Right lobe of liver (tissue), 6 donors: ENCODE measurements at regions of chr17 and their contacts with region 1.

Region 1: GRCh38 chr17:35529866-35530265 is 7.6 kb downstream of the SLFN12L start:
- DNase-seq: no peak
- ATAC-seq: no peak
- H3K4me3 ChIP-seq: no peak overlapping the region
- H3K27ac ChIP-seq: no peak overlapping the region
- H3K4me1 ChIP-seq: peaks cover 0 to 10% (median 4%) of the 10 kb centered on the region in 4 donors
- H3K27me3 ChIP-seq: no peaks in the 10 kb centered on the region
- CTCF ChIP-seq: no peak
- POLR2A ChIP-seq: no peak

Region 2: DNA sequence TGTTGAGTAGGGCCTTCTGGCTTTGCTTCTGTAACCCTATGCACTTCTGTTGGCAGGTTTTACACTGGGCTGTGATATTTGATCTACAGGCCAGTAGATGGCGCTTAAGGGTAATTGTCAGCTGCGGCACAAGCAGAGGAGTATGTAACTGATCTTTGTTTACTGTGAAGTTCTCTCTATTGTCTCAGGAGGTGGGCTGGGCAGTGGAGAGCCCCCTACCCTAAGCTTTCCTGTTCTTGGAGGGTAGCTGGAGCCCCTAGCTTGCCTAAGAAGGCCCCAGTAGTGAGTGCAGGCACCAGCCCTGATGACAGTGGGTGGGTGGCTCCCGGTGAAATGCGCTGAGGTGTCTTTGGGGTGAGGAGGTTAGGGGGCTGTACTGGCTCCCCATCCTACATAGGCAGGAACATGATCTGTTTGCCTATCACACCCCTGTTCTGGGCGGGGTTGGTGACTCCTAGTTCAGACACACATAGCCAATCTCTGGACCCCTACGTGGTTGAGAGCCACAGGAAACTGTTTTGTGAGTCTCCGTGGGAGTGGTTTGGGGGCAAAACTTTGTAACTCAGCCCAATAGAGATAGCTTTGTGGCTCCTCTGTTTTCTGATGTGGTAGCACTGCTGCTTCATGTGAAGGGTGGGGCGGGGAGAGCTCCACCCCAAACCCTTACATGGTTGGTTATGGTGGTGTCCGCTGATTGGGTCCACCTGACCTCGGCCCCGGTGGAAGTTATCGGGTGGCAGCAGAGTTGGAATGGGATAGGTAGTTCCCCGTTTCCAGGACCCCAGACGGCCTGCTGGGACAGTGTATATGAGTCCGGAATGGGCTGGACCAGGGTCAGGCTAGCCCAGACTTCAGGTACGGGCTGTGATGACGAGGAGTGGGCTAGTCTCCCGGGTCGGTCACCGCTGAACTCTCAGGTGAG is 216.8 kb before region 1 on chr17:
- intact Hi-C with region 1: loop called (anchors 5 kb)
- DNase-seq: peak; percentile 28 to 60 (median 56)
- ATAC-seq: peak; percentile 93 to 96 (median 94)
- H3K4me3 ChIP-seq: peak overlapping the region; percentile 1 to 13 (median 8)
- H3K27ac ChIP-seq: peak overlapping the region in 2 of 3 donors; percentile 25 to 41
- H3K4me1 ChIP-seq: no peaks in the 10 kb centered on the region
- H3K27me3 ChIP-seq: no peaks in the 10 kb centered on the region
- CTCF ChIP-seq: peak; percentile 78 to 85 (median 82)
- POLR2A ChIP-seq: no peak

Region 3: DNA sequence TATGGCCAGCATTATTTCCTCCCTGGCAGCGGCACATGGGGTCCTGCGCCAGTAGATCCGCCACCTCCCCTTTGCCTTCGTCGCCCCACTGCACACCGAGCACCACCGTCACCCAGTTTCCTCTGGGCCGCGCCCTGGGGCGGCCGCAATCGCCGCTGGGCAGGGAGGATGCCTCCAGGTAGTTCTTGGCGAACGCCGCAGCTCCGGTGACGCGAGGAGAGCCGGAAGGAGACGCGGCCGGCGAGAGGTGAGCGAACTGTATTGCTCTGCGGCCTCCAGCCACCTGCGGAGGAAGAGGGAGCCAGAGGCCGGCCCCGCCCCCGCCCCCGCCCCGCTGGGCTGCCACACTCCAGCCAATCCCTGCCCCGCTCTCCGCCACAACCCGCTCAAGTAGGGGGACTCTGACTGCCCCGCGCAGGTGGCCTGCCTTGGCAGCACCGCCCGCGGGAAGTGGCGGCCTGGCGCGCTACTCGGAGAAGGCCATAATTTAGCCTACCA is 69.5 kb before region 1 on chr17:
- intact Hi-C with region 1: no loop called
- DNase-seq: peak; percentile 48 to 64 (median 50)
- ATAC-seq: peak; percentile 53 to 80 (median 72)
- H3K4me3 ChIP-seq: peak overlapping the region in 2 of 3 donors; percentile 0 to 13
- H3K27ac ChIP-seq: no peak overlapping the region
- H3K4me1 ChIP-seq: no peaks in the 10 kb centered on the region
- H3K27me3 ChIP-seq: peaks cover 6 to 7% of the 10 kb centered on the region in 2 donors
- CTCF ChIP-seq: no peak
- POLR2A ChIP-seq: no peak